Natural killer cell (primary cell): ENCODE measurements at regions of chrX and their contacts with region 1.

Region 1: GRCh38 chrX:71103110-71103983 is 3.2 kb downstream of the CXorf65 start:
- DNase-seq: peak; percentile 64 to 80
- ATAC-seq: peak; percentile 60 to 84 (median 70)
- H3K4me3 ChIP-seq: peak overlapping the region; percentile 28
- H3K4me3 Mint-ChIP-seq: peak overlapping the region; percentile 86
- H3K27ac ChIP-seq: peak overlapping the region; percentile 89
- H3K27ac Mint-ChIP-seq: peak overlapping the region; percentile 97 to 99
- H3K4me1 ChIP-seq: peaks cover 88% of the 10 kb centered on the region
- H3K4me1 Mint-ChIP-seq: peaks cover 62 to 82% of the 10 kb centered on the region in 2 donors
- H3K27me3 ChIP-seq: no peaks in the 10 kb centered on the region
- H3K27me3 Mint-ChIP-seq: peaks cover 0 to 13% of the 10 kb centered on the region in 2 donors
- CTCF ChIP-seq: no peak

Region 2: DNA sequence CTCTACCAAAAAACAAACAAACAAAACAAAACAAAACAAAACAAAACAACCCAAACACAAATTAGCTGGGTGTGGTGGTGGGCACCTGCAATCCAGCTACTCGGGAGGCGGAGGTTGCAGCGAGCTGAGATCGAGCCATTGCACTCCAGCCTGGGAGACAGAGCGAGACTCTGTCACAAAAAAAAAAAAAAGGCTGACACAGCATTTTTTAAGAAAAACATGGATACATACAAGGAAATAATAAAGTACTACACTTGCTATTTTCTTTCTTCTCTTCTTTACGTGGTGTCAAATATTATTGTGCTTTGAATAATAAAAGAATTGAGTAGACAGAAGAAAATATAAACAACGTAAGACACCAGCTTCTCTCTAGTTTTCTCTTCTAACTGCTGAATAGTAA is 268.8 kb before region 1 on chrX:
- intact Hi-C with region 1: no loop called
- DNase-seq: no peak
- ATAC-seq: no peak
- H3K4me3 ChIP-seq: no peak overlapping the region
- H3K4me3 Mint-ChIP-seq: no peak overlapping the region
- H3K27ac ChIP-seq: no peak overlapping the region
- H3K27ac Mint-ChIP-seq: no peak overlapping the region
- H3K4me1 ChIP-seq: no peaks in the 10 kb centered on the region
- H3K4me1 Mint-ChIP-seq: no peaks in the 10 kb centered on the region
- H3K27me3 ChIP-seq: no peaks in the 10 kb centered on the region
- H3K27me3 Mint-ChIP-seq: peaks cover 9 to 15% of the 10 kb centered on the region in 2 donors
- CTCF ChIP-seq: no peak

Region 3: GRCh38 chrX:71118032-71118984 is 15.0 kb after region 1 on chrX and contains the start of gene MED12:
- intact Hi-C with region 1: loop called (anchors 1 kb)
- DNase-seq: peak; percentile 80 to 87
- ATAC-seq: peak; percentile 94 to 98 (median 97)
- H3K4me3 ChIP-seq: peak within 1 kb of the TSS; percentile 92
- H3K4me3 Mint-ChIP-seq: peak within 1 kb of the TSS; percentile 88
- H3K27ac ChIP-seq: peak within 1 kb of the TSS; percentile 79
- H3K27ac Mint-ChIP-seq: peak within 1 kb of the TSS; percentile 90 to 92
- H3K4me1 ChIP-seq: peaks cover 20% of the 10 kb centered on the region
- H3K4me1 Mint-ChIP-seq: peaks cover 10 to 30% of the 10 kb centered on the region in 2 donors
- H3K27me3 ChIP-seq: no peaks in the 10 kb centered on the region
- H3K27me3 Mint-ChIP-seq: no peaks in the 10 kb centered on the region
- CTCF ChIP-seq: no peak
- total RNA-seq, gene MED12: 111 to 156 (median 115) TPM

Region 4: DNA sequence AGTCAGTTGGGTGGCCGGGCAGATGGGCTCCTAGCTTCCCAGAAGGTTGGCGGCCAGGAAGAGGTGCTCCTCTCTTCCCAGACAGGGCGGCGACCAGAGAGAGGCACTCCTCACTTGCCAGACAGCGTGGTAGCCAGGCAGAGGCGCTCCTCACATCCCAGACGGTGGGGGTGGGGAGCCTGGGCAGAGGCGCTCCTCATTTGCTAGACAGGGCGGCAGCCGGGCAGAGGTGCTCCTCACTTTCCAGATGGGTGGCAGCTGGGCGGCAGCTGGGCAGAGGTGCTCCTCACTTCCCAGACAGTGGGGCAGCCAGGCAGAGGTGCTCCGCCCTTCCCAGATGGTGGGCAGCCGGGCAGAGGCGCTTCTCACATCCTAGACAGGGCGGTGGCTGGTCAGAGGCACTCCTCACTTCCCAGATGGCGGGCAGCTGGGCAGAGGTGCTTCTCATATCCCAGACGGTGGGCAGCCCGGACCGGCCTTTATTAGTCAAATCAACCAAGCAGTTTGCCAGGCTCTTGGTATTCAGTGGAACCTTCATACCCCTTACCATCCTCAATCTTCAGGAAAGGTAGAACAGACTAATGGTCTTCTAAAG is 166.6 kb after region 1 on chrX:
- intact Hi-C with region 1: no loop called
- DNase-seq: no peak
- ATAC-seq: no peak
- H3K4me3 ChIP-seq: no peak overlapping the region
- H3K4me3 Mint-ChIP-seq: no peak overlapping the region
- H3K27ac ChIP-seq: no peak overlapping the region
- H3K27ac Mint-ChIP-seq: no peak overlapping the region
- H3K4me1 ChIP-seq: no peaks in the 10 kb centered on the region
- H3K4me1 Mint-ChIP-seq: no peaks in the 10 kb centered on the region
- H3K27me3 ChIP-seq: no peaks in the 10 kb centered on the region
- H3K27me3 Mint-ChIP-seq: no peaks in the 10 kb centered on the region
- CTCF ChIP-seq: no peak

Region 5: GRCh38 chrX:71439420-71439819 is 336.1 kb after region 1 on chrX:
- intact Hi-C with region 1: no loop called
- DNase-seq: no peak
- ATAC-seq: no peak
- H3K4me3 ChIP-seq: no peak overlapping the region
- H3K4me3 Mint-ChIP-seq: no peak overlapping the region
- H3K27ac ChIP-seq: no peak overlapping the region
- H3K27ac Mint-ChIP-seq: peak overlapping the region in 1 of 2 donors; percentile 80
- H3K4me1 ChIP-seq: no peaks in the 10 kb centered on the region
- H3K4me1 Mint-ChIP-seq: peaks cover 0 to 5% of the 10 kb centered on the region in 2 donors
- H3K27me3 ChIP-seq: no peaks in the 10 kb centered on the region
- H3K27me3 Mint-ChIP-seq: no peaks in the 10 kb centered on the region
- CTCF ChIP-seq: no peak